H1 (cell line): ENCODE measurements at regions of chr3 and their contacts with region 1.

Region 1: DNA sequence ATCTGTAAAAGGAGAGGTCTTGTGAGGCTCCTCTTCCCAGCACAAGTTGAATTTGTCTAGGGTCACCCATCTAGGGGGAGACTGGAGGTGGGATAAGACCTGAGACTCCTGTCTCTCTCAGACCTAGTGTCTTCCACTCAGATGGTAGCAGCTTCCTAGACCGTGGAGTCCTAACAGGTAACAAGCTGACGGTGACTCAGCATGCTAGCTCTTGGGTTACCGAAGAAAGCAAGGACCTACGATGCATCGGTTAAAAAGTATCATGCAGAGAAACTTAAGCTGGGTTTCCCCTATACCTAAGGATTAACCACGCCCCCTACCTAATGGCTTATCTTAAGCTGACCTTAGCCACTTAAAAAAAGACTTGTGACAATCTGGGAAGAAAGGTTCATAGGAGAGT is 7.6 kb downstream of the LRRN1 start:
- DNase-seq: no peak
- H3K4me3 ChIP-seq: peak overlapping the region in 1 of 4 experiments; percentile 8; a peak in 1 of 8 replicates
- H3K27ac ChIP-seq: no peak overlapping the region
- H3K4me1 ChIP-seq: peaks cover 7 to 31% (median 25%) of the 10 kb centered on the region in 4 experiments; a peak in 6 of 7 replicates
- H3K27me3 ChIP-seq: no peaks in the 10 kb centered on the region
- CTCF ChIP-seq: no peak
- EP300 ChIP-seq: no peak
- POLR2A ChIP-seq: peak in 1 of 2 experiments; percentile 22; a peak in 1 of 3 replicates
- RAD21 ChIP-seq: no peak

Region 2: DNA sequence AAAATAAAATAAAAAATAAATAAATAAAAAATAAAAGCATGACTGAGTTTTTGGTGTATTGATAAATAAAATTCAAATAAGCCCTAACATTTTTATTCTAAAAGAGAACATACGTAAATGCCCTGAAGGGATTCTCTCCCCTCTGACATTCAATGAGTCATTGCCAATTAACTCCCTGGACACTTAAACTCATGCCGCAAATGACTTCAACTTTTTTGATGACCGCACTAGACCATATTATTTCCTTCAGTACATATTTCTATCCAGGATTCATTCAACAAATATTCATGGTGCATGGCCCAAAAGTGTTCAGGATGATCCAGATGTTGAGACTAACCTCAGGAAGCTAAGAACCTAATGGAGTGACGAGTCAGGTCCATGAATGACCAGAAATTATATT is 203.5 kb before region 1 on chr3:
- CTCF ChIA-PET with region 1: interaction called, 15 read pairs
- POLR2A ChIA-PET with region 1: interaction called, 6 read pairs
- DNase-seq: no peak
- H3K4me3 ChIP-seq: no peak overlapping the region
- H3K27ac ChIP-seq: no peak overlapping the region
- H3K4me1 ChIP-seq: peaks cover 0 to 4% (median 0%) of the 10 kb centered on the region in 4 experiments; a peak in 2 of 7 replicates
- H3K27me3 ChIP-seq: no peaks in the 10 kb centered on the region
- CTCF ChIP-seq: no peak
- EP300 ChIP-seq: no peak
- POLR2A ChIP-seq: no peak
- RAD21 ChIP-seq: no peak

Region 3: GRCh38 chr3:3734881-3735280 is 72.0 kb before region 1 on chr3:
- CTCF ChIA-PET with region 1: no interaction called
- POLR2A ChIA-PET with region 1: no interaction called
- DNase-seq: no peak
- H3K4me3 ChIP-seq: no peak overlapping the region
- H3K27ac ChIP-seq: no peak overlapping the region
- H3K4me1 ChIP-seq: peaks cover 0 to 7% (median 4%) of the 10 kb centered on the region in 4 experiments; a peak in 4 of 7 replicates
- H3K27me3 ChIP-seq: no peaks in the 10 kb centered on the region
- CTCF ChIP-seq: no peak
- EP300 ChIP-seq: no peak
- POLR2A ChIP-seq: no peak
- RAD21 ChIP-seq: no peak

Region 4: DNA sequence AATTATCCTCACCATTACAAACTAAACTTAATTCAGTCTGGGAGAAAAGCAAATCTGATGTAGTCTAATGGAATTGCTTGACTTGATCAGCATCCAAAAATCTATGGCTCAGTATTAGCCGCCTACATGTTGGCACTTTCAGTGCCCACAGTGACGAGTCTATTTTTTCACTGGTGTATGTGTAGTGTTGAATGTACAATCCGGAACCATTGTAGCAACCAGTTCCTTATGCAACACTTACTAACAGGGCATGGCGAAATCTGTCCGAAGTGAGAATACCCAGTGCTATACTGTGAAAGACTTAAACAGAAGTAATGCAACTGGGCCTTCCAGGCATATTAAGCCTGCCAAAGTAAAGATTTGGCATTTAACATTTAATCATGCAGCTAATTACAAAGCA is 11.0 kb after region 1 on chr3:
- CTCF ChIA-PET with region 1: interaction called, 4 read pairs
- POLR2A ChIA-PET with region 1: interaction called, 115 read pairs
- DNase-seq: no peak
- H3K4me3 ChIP-seq: no peak overlapping the region
- H3K27ac ChIP-seq: no peak overlapping the region
- H3K4me1 ChIP-seq: no peaks in the 10 kb centered on the region; a peak in 1 of 7 replicates
- H3K27me3 ChIP-seq: no peaks in the 10 kb centered on the region
- CTCF ChIP-seq: no peak
- EP300 ChIP-seq: no peak
- POLR2A ChIP-seq: no peak
- RAD21 ChIP-seq: no peak